Dorsolateral prefrontal cortex (tissue), 120 donors: ENCODE measurements at regions of chr6 and their contacts with region 1.

Region 1: DNA sequence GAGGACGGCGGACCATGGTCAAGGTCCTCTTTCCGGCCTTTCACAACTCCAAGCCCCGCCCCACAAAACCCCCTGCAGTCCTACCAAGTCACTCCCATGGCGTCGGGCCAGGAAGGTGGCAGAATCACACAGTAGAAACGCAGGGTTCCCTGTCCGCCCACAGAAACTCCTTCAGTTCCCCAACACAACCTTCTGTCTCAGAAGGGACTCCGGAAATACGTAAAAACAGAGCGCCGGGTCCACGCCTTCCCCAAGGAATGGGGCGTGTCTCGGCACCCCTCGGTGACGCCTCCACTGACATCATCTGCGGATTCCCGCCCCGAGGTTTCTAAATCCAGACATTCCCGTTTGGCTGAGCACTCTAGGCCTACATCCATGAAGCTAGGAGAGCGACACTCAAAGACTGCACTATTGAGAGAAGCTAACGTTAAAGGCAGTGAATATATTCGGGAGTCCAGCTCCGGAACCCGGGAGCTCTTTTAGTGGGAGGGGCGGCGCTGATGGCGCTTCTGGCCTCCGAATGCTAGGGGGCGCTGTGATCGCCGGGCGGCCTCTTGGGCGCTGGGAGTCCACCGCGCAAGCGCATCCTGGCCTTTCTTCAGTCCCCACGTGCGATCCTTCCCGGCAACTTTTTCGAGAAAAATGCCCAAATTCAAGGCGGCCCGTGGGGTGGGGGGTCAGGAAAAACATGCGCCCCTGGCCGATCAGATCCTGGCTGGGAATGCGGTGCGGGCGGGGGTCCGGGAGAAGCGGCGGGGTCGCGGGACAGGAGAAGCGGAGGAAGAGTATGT is at the starts of genes BYSL and MED20:
- DNase-seq: peak; percentile 92 to 97 (median 96)
- H3K4me3 ChIP-seq: peak within 1 kb of the TSS; percentile 68 to 100 (median 91)
- H3K27ac ChIP-seq: peak within 1 kb of the TSS; percentile 91 to 100 (median 98)
- H3K27me3 ChIP-seq: no peaks in the 10 kb centered on the region
- CTCF ChIP-seq: peak; percentile 93 to 100 (median 99)
- total RNA-seq, gene BYSL: 6.6 to 16.7 (median 10.7) TPM
- total RNA-seq, gene MED20: 7.2 to 21.0 (median 14.8) TPM

Region 2: GRCh38 chr6:41895300-41896233 is 25.5 kb before region 1 on chr6 and contains the start of gene USP49:
- intact Hi-C with region 1: loop called in 1 of 2 experiments (anchors 2 kb)
- DNase-seq: peak; percentile 79 to 92 (median 88)
- H3K4me3 ChIP-seq: peak within 1 kb of the TSS; percentile 57 to 96 (median 83)
- H3K27ac ChIP-seq: peak within 1 kb of the TSS in 54 of 59 donors; percentile 36 to 93 (median 76)
- H3K27me3 ChIP-seq: no peaks in the 10 kb centered on the region
- CTCF ChIP-seq: peak in 8 of 56 donors; percentile 12 to 38 (median 20)
- total RNA-seq, gene USP49: 7.2 to 16.4 (median 11.2) TPM

Region 3: GRCh38 chr6:41941280-41942066 is 20.4 kb after region 1 on chr6 and contains the start of gene CCND3:
- intact Hi-C with region 1: loop called (anchors 2 kb)
- DNase-seq: peak; percentile 77 to 96 (median 91)
- H3K4me3 ChIP-seq: peak within 1 kb of the TSS; percentile 66 to 97 (median 88)
- H3K27ac ChIP-seq: peak within 1 kb of the TSS; percentile 27 to 94 (median 84)
- H3K27me3 ChIP-seq: no peaks in the 10 kb centered on the region
- CTCF ChIP-seq: peak in 22 of 56 donors; percentile 1 to 51 (median 19)
- total RNA-seq, gene CCND3: 55.7 to 135 (median 83.5) TPM

Region 4: GRCh38 chr6:42217519-42218367 is 296.6 kb after region 1 on chr6 and contains the start of gene MRPS10:
- intact Hi-C with region 1: loop called (anchors 1 to 5 kb)
- DNase-seq: peak; percentile 87 to 96 (median 92)
- H3K4me3 ChIP-seq: peak within 1 kb of the TSS; percentile 54 to 97 (median 80)
- H3K27ac ChIP-seq: peak within 1 kb of the TSS in 54 of 59 donors; percentile 2 to 88 (median 68)
- H3K27me3 ChIP-seq: no peaks in the 10 kb centered on the region
- CTCF ChIP-seq: peak in 52 of 56 donors; percentile 15 to 75 (median 49)
- total RNA-seq, gene MRPS10: 18.8 to 41.4 (median 29.6) TPM